B cell (primary cell): ENCODE measurements at regions of chr2 and their contacts with region 1.

Region 1: DNA sequence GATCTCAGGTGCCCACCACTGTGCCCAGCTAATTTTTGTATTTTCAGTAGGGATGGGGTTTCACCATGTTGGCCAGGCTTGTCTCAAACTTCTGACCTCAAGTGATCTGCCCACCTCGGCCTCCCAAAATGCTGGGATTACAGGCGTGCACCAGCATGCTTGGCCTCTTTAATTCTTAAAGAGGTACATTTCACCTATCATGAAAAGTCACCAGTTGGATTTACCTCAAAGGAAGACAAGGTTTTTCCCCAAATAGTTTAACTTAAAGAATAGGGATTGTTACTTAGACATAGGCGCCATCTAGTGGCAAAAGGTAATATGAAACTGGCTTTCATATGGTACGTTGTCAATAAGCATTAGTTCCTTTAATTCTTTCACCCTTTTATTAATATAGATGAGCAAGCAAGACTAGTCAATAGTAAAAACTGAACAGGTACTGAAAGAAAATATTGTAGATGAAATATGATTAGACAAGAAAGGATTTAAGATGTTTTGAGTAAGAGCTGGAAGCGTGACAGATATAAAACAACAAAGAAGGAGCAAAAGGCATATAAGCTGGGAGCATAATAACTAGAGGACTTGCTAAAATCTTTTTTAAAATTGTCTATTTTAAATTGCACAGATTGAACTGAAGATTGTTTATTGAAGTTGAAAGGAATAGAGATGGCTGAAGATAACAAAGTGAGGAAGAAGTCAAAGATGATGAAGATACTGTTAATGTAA is 35.0 kb upstream of the PSMD14 start:
- DNase-seq: peak; percentile 76
- ATAC-seq: peak; percentile 39
- H3K4me3 ChIP-seq: no peak overlapping the region
- H3K4me3 Mint-ChIP-seq: no peak overlapping the region
- H3K27ac ChIP-seq: no peak overlapping the region
- H3K27ac Mint-ChIP-seq: no peak overlapping the region
- H3K4me1 ChIP-seq: no peaks in the 10 kb centered on the region
- H3K4me1 Mint-ChIP-seq: no peaks in the 10 kb centered on the region
- H3K27me3 ChIP-seq: no peaks in the 10 kb centered on the region
- H3K27me3 Mint-ChIP-seq: no peaks in the 10 kb centered on the region
- CTCF ChIP-seq: peak; percentile 98

Region 2: GRCh38 chr2:160994141-160995002 is 278.8 kb before region 1 on chr2:
- CTCF ChIA-PET with region 1: interaction called, 4 read pairs
- POLR2A ChIA-PET with region 1: no interaction called
- intact Hi-C with region 1: loop called (anchors 5 kb)
- DNase-seq: peak; percentile 81
- ATAC-seq: peak; percentile 68
- H3K4me3 ChIP-seq: no peak overlapping the region
- H3K4me3 Mint-ChIP-seq: no peak overlapping the region
- H3K27ac ChIP-seq: no peak overlapping the region
- H3K27ac Mint-ChIP-seq: no peak overlapping the region
- H3K4me1 ChIP-seq: peaks cover 0 to 3% of the 10 kb centered on the region in 2 donors
- H3K4me1 Mint-ChIP-seq: peaks cover 2% of the 10 kb centered on the region
- H3K27me3 ChIP-seq: no peaks in the 10 kb centered on the region
- H3K27me3 Mint-ChIP-seq: no peaks in the 10 kb centered on the region
- CTCF ChIP-seq: peak; percentile 90

Region 3: DNA sequence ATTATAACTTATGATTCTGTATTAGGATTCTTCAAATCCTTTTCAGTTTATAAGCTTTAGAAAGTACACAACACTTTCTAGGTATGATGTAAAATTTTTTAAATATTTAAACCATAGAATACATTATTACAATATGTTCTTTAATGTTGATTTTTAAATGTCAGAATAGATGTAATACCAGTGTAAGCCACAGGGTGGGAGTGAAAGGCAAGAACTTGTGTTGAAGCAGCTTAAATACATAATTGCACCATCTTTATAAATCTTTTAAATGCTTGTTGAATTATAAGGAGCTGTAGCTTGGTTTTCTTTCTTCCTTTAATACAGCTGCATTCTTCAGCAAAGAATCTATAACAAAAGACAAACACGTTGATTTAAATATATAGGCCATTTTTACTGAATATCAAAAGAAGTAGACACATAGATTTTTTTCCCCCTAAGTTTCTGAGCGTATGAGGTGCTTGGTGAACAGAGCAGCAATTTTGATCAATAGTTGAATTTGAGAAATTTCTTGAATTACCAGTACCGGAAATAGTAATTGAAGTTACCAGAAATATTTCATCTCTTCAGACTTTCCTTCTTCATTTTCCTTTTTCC is 50.0 kb before region 1 on chr2:
- CTCF ChIA-PET with region 1: interaction called, 74 read pairs
- POLR2A ChIA-PET with region 1: interaction called, 3 read pairs
- intact Hi-C with region 1: loop called (anchors 1 kb)
- DNase-seq: peak; percentile 62
- ATAC-seq: peak; percentile 66
- H3K4me3 ChIP-seq: no peak overlapping the region
- H3K4me3 Mint-ChIP-seq: no peak overlapping the region
- H3K27ac ChIP-seq: no peak overlapping the region
- H3K27ac Mint-ChIP-seq: no peak overlapping the region
- H3K4me1 ChIP-seq: no peaks in the 10 kb centered on the region
- H3K4me1 Mint-ChIP-seq: no peaks in the 10 kb centered on the region
- H3K27me3 ChIP-seq: no peaks in the 10 kb centered on the region
- H3K27me3 Mint-ChIP-seq: no peaks in the 10 kb centered on the region
- CTCF ChIP-seq: peak; percentile 91

Region 4: GRCh38 chr2:161238560-161239325 is 34.5 kb before region 1 on chr2:
- CTCF ChIA-PET with region 1: interaction called, 12 read pairs
- POLR2A ChIA-PET with region 1: no interaction called
- intact Hi-C with region 1: no loop called
- DNase-seq: peak; percentile 66
- ATAC-seq: peak; percentile 54
- H3K4me3 ChIP-seq: peak overlapping the region; percentile 43 to 75 (median 57)
- H3K4me3 Mint-ChIP-seq: peak overlapping the region; percentile 90
- H3K27ac ChIP-seq: no peak overlapping the region
- H3K27ac Mint-ChIP-seq: peak overlapping the region; percentile 60
- H3K4me1 ChIP-seq: peaks cover 17% of the 10 kb centered on the region in 2 donors
- H3K4me1 Mint-ChIP-seq: peaks cover 51% of the 10 kb centered on the region
- H3K27me3 ChIP-seq: peaks cover 0 to 6% (median 0%) of the 10 kb centered on the region in 4 experiments
- H3K27me3 Mint-ChIP-seq: no peaks in the 10 kb centered on the region
- CTCF ChIP-seq: no peak

Region 5: DNA sequence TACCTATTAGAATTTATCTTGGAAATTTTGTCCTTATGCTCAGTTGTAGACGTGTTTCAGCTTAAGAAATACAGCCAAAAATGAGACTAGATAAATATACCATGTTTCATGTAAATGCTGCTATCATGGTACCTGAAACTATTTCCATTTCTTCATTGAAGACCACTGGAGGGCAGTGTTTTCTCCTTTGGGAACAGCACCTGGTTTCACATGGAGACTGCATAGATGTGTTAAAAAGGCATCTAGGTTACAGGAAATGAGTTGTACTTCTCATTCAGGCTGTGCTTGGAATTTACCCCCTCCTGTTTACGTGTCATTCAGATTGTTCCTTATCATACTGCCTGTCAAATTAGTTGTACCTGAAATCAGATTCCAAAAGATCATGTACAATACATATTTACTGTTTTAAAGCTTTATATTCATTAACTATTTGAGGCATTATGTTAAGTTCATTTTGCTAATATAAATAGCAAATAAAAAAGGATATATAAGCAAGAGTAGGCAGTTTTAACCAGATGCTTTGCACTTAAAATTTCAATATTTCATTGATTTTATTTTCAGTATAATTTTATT is 22.2 kb before region 1 on chr2:
- CTCF ChIA-PET with region 1: interaction called, 10 read pairs
- POLR2A ChIA-PET with region 1: no interaction called
- intact Hi-C with region 1: no loop called
- DNase-seq: peak; percentile 47
- ATAC-seq: peak; percentile 53
- H3K4me3 ChIP-seq: no peak overlapping the region
- H3K4me3 Mint-ChIP-seq: no peak overlapping the region
- H3K27ac ChIP-seq: no peak overlapping the region
- H3K27ac Mint-ChIP-seq: no peak overlapping the region
- H3K4me1 ChIP-seq: peaks cover 0 to 3% of the 10 kb centered on the region in 2 donors
- H3K4me1 Mint-ChIP-seq: peaks cover 29% of the 10 kb centered on the region
- H3K27me3 ChIP-seq: no peaks in the 10 kb centered on the region
- H3K27me3 Mint-ChIP-seq: peaks cover 10% of the 10 kb centered on the region
- CTCF ChIP-seq: peak; percentile 67

Region 6: GRCh38 chr2:161308178-161308955 is 35.2 kb after region 1 on chr2 and contains the start of gene PSMD14:
- CTCF ChIA-PET with region 1: interaction called, 7 read pairs
- POLR2A ChIA-PET with region 1: no interaction called
- intact Hi-C with region 1: loop called (anchors 2 kb)
- DNase-seq: peak; percentile 92
- ATAC-seq: peak; percentile 90
- H3K4me3 ChIP-seq: peak within 1 kb of the TSS; percentile 58 to 89 (median 86)
- H3K4me3 Mint-ChIP-seq: peak within 1 kb of the TSS; percentile 95
- H3K27ac ChIP-seq: peak within 1 kb of the TSS; percentile 69 to 90
- H3K27ac Mint-ChIP-seq: peak within 1 kb of the TSS; percentile 95
- H3K4me1 ChIP-seq: peaks cover 18 to 20% of the 10 kb centered on the region in 2 donors
- H3K4me1 Mint-ChIP-seq: peaks cover 38% of the 10 kb centered on the region
- H3K27me3 ChIP-seq: peaks cover 0 to 3% (median 0%) of the 10 kb centered on the region in 4 experiments
- H3K27me3 Mint-ChIP-seq: no peaks in the 10 kb centered on the region
- CTCF ChIP-seq: no peak
- total RNA-seq, gene PSMD14: 24.9 and 27.0 TPM in 2 replicates

Region 7: DNA sequence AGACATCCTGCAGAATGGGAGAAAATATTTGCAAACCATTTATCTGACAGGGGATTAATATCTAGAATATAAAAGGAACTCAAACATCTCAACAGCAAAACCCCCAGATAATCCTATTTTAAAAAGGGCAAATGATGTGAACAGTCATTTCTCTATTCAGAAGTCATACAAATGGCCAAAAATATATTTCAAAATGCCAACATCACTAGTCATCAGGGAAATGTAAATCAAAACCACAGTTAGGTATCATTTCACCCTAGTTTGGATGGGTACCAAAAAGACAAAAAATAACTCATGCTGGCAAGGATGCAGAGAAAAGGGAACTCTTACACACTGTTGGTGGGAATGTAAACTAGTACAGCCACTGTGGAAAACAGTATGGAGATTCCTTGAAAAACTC is 212.9 kb after region 1 on chr2:
- CTCF ChIA-PET with region 1: no interaction called
- POLR2A ChIA-PET with region 1: no interaction called
- intact Hi-C with region 1: no loop called
- DNase-seq: no peak
- ATAC-seq: no peak
- H3K4me3 ChIP-seq: no peak overlapping the region
- H3K4me3 Mint-ChIP-seq: no peak overlapping the region
- H3K27ac ChIP-seq: no peak overlapping the region
- H3K27ac Mint-ChIP-seq: no peak overlapping the region
- H3K4me1 ChIP-seq: no peaks in the 10 kb centered on the region
- H3K4me1 Mint-ChIP-seq: no peaks in the 10 kb centered on the region
- H3K27me3 ChIP-seq: no peaks in the 10 kb centered on the region
- H3K27me3 Mint-ChIP-seq: no peaks in the 10 kb centered on the region
- CTCF ChIP-seq: no peak